PC-9 (cell line): ENCODE measurements at regions of chr2 and their contacts with region 1.

Region 1: DNA sequence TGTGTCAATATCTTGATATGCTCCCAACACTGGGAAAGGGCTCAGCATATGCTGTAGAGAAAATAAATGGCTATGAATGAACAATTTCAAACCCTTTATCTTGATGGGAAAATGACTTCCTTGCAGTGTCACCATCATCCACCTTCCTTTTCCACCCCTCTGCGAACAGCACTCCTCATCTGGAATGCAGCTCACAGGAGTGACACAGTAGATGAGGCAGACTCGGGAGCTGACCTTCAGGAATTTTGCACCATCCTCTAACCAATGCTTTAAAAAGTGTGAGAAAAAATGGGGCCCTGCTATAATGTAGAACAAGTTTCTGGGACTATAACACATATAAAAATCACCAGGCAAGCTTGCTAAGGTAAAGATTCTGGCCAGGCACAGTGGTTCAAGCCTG is 41.3 kb upstream of the YPEL5 start:
- DNase-seq: no peak
- H3K4me3 ChIP-seq: no peak overlapping the region
- H3K27ac ChIP-seq: no peak overlapping the region
- H3K4me1 ChIP-seq: no peaks in the 10 kb centered on the region
- H3K27me3 ChIP-seq: peaks cover 37% of the 10 kb centered on the region
- CTCF ChIP-seq: no peak

Region 2: GRCh38 chr2:29865512-29865911 is 240.0 kb before region 1 on chr2:
- CTCF ChIA-PET with region 1: interaction called, 13 read pairs
- POLR2A ChIA-PET with region 1: no interaction called
- intact Hi-C with region 1: no loop called
- DNase-seq: no peak
- H3K4me3 ChIP-seq: no peak overlapping the region
- H3K27ac ChIP-seq: no peak overlapping the region
- H3K4me1 ChIP-seq: no peaks in the 10 kb centered on the region
- H3K27me3 ChIP-seq: peaks cover 14% of the 10 kb centered on the region; the same call in 1 of the 2 replicates
- CTCF ChIP-seq: no peak